Panc1 (cell line): ENCODE measurements at regions of chr1 and their contacts with region 1.

Region 1: DNA sequence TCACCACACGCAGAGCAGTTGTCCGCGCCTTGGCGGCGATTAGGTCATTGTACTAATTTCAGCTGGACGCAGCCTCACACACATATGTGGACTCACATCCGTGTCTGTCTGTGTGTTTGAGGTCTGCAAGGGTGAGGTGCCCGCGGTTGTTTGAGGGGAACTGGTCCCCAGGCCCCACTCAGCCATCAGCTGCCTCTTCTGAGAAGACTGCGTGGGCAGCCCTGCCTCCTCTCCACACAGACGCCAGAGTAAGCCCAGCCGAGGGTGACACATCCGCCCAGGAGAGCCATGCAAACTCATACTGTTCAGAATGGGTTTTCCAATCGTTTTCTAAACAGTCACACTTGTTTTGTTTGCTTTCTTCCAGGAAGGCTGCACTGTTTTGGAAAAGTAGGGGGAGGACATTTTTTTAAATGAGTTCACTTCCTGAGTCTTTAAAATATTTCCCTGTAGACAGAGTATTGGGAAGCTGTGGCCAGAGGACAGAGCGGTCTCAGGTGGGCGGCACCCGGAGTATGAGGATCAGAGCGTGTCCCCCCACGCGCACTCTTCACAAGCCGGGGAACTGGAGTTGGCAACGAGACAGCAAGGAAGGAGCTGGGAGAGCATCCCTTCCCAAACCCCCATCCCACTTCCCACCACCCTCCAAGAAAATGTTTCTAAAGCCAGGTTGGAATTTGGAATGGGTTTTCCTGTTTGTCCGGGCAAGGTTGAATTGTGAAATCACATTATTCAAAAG is 53.3 kb downstream of the TOMM20 start:
- DNase-seq: no peak
- ATAC-seq: peak; percentile 70
- H3K4me3 ChIP-seq: peak overlapping the region in 1 of 2 experiments; percentile 7; a peak in 2 of 4 replicates
- H3K27ac ChIP-seq: peak overlapping the region; percentile 100
- H3K4me1 ChIP-seq: peaks cover 69% of the 10 kb centered on the region
- H3K27me3 ChIP-seq: no peaks in the 10 kb centered on the region
- CTCF ChIP-seq: no peak

Region 2: DNA sequence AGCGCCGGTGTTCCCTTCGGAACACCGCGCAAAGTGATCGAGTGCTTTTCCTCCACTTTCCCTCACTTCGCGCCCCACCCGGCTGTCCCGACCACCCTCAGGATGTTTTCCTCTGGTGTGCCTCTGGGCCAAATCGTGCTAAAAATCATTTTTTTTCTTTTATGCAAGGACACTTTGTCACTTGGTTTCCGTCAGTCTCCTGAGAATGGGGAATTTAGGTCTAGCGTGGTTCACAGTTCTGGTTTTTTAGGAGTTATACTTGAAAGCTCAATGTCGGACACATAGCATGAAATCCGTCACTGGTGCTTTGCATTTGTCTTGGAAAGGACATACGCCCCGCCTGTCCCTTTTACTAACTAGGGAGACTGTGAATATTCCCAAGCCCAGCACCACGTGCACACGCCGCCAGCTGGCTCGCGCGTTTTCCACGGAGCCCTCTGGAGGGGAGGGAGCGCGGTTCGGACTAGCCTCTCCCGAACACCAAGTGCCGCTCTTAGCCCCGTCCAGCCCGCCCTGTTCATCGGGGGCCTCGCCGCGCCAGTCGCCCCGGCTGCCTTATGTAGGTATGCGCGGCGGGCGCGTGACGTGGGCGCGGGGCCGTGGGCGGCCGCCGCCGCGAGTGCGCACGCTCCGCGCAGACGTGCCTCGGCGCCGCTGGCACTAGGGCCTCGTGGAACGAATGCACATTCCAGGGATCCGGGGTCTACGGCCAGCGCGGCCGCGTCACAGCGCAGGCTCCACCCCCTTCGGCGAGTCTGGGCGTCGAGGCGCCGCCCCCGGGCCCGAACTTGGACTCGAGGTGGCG is 464.8 kb before region 1 on chr1:
- CTCF ChIA-PET with region 1: no interaction called
- POLR2A ChIA-PET with region 1: interaction called, 4 read pairs
- in situ Hi-C with region 1: no loop called
- intact Hi-C with region 1: loop called (anchors 5 kb)
- DNase-seq: no peak
- ATAC-seq: peak; percentile 67
- H3K4me3 ChIP-seq: peak overlapping the region; percentile 54 to 74
- H3K27ac ChIP-seq: peak overlapping the region; percentile 100
- H3K4me1 ChIP-seq: peaks cover 42% of the 10 kb centered on the region
- H3K27me3 ChIP-seq: no peaks in the 10 kb centered on the region
- CTCF ChIP-seq: no peak

Region 3: GRCh38 chr1:234683861-234684632 is 391.3 kb before region 1 on chr1:
- CTCF ChIA-PET with region 1: no interaction called
- POLR2A ChIA-PET with region 1: no interaction called
- in situ Hi-C with region 1: no loop called
- intact Hi-C with region 1: no loop called
- DNase-seq: peak; percentile 64
- ATAC-seq: peak; percentile 98
- H3K4me3 ChIP-seq: no peak overlapping the region
- H3K27ac ChIP-seq: peak overlapping the region; percentile 65
- H3K4me1 ChIP-seq: peaks cover 6% of the 10 kb centered on the region
- H3K27me3 ChIP-seq: no peaks in the 10 kb centered on the region
- CTCF ChIP-seq: no peak

Region 4: GRCh38 chr1:234722904-234723720 is 352.2 kb before region 1 on chr1:
- CTCF ChIA-PET with region 1: no interaction called
- POLR2A ChIA-PET with region 1: interaction called, 3 read pairs
- in situ Hi-C with region 1: no loop called
- intact Hi-C with region 1: loop called (anchors 5 kb)
- DNase-seq: peak; percentile 88
- ATAC-seq: peak; percentile 5; the same call in 1 of the 2 replicates
- H3K4me3 ChIP-seq: peak overlapping the region in 1 of 2 experiments; percentile 4; a peak in 1 of 4 replicates
- H3K27ac ChIP-seq: peak overlapping the region; percentile 95
- H3K4me1 ChIP-seq: peaks cover 82% of the 10 kb centered on the region
- H3K27me3 ChIP-seq: no peaks in the 10 kb centered on the region
- CTCF ChIP-seq: no peak

Region 5: DNA sequence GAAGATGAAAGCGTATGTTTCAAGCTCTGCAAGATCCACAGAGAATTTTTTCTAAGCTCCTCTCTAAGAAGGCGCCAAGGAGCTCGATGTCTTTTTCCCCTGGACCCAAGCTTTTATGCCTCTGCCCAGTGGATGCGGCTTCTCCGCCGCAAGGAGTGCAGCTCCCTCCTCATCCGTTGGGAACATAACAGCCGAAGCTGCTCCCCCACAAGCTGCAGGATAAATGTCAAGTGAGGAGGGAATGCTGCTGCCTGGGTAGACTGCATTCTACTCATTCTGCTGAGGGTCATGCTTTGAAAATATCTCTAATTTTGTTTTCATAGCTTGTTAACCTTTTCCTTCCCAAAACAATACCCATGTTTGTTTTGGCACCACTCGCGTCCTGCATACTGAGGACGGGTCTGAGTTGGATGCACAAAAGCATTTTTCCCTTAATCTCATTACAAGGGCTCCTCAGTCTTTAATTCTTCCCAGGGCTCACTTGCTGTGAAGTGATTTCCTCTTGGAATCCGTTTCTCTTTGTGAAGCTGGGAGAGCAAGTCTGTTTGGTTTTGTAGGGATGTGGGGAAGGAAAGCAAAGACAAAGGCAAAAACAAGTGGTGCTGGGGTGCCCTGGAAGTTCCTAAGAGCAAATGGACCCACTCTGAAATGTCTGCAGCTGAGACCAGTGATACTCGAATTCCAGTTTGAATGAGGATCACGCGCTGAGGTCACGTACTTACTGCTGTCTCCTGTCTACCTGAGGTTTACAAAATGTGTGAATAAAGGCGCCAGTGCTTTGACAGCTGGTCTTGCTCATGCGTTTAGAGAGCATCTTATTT is 331.4 kb before region 1 on chr1:
- CTCF ChIA-PET with region 1: no interaction called
- POLR2A ChIA-PET with region 1: no interaction called
- in situ Hi-C with region 1: loop called (anchors 10 kb)
- intact Hi-C with region 1: no loop called
- DNase-seq: no peak
- ATAC-seq: peak; percentile 79
- H3K4me3 ChIP-seq: peak overlapping the region in 1 of 2 experiments; percentile 10; a peak in 1 of 4 replicates
- H3K27ac ChIP-seq: peak overlapping the region; percentile 98
- H3K4me1 ChIP-seq: peaks cover 51% of the 10 kb centered on the region
- H3K27me3 ChIP-seq: no peaks in the 10 kb centered on the region
- CTCF ChIP-seq: no peak

Region 6: GRCh38 chr1:234875953-234876855 is 199.2 kb before region 1 on chr1:
- CTCF ChIA-PET with region 1: no interaction called
- POLR2A ChIA-PET with region 1: no interaction called
- in situ Hi-C with region 1: no loop called
- intact Hi-C with region 1: loop called (anchors 10 kb)
- DNase-seq: no peak
- ATAC-seq: peak; percentile 75
- H3K4me3 ChIP-seq: no peak overlapping the region
- H3K27ac ChIP-seq: peak overlapping the region; percentile 90
- H3K4me1 ChIP-seq: peaks cover 54% of the 10 kb centered on the region
- H3K27me3 ChIP-seq: no peaks in the 10 kb centered on the region
- CTCF ChIP-seq: no peak

Region 7: GRCh38 chr1:234955107-234955731 is 120.1 kb before region 1 on chr1:
- CTCF ChIA-PET with region 1: no interaction called
- POLR2A ChIA-PET with region 1: interaction called, 3 read pairs
- in situ Hi-C with region 1: loop called (anchors 10 kb)
- intact Hi-C with region 1: loop called (anchors 5 kb)
- DNase-seq: no peak
- ATAC-seq: no peak
- H3K4me3 ChIP-seq: no peak overlapping the region
- H3K27ac ChIP-seq: peak overlapping the region; percentile 100
- H3K4me1 ChIP-seq: peaks cover 62% of the 10 kb centered on the region
- H3K27me3 ChIP-seq: no peaks in the 10 kb centered on the region
- CTCF ChIP-seq: no peak

Region 8: GRCh38 chr1:234963180-234963903 is 112.0 kb before region 1 on chr1:
- CTCF ChIA-PET with region 1: no interaction called
- POLR2A ChIA-PET with region 1: interaction called, 3 read pairs
- in situ Hi-C with region 1: loop called (anchors 10 kb)
- intact Hi-C with region 1: loop called (anchors 5 kb)
- DNase-seq: no peak
- ATAC-seq: peak; percentile 54
- H3K4me3 ChIP-seq: peak overlapping the region in 1 of 2 experiments; percentile 29; a peak in 2 of 4 replicates
- H3K27ac ChIP-seq: peak overlapping the region; percentile 100
- H3K4me1 ChIP-seq: peaks cover 71% of the 10 kb centered on the region
- H3K27me3 ChIP-seq: no peaks in the 10 kb centered on the region
- CTCF ChIP-seq: no peak

Region 9: DNA sequence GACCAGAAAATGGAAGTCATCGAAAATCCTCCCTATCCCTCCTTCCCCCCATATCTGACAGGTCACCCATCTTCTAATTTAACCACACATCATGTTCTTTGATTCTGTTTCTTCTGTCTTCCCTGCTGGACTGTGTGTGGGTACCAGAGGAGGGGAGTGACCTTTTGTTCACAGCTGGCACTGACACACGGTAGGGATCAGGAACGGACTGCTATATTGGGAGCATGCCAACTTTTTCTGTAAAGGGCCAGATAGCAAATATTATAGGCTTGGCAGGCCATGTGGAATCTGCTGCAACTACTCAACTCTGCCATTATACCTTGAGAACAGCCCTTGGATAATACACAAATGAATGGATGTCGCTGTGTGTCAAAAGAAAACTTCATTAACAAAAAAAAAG is 60.8 kb after region 1 on chr1:
- CTCF ChIA-PET with region 1: no interaction called
- POLR2A ChIA-PET with region 1: no interaction called
- in situ Hi-C with region 1: no loop called
- intact Hi-C with region 1: no loop called
- DNase-seq: no peak
- ATAC-seq: no peak
- H3K4me3 ChIP-seq: no peak overlapping the region
- H3K27ac ChIP-seq: no peak overlapping the region
- H3K4me1 ChIP-seq: no peaks in the 10 kb centered on the region
- H3K27me3 ChIP-seq: no peaks in the 10 kb centered on the region
- CTCF ChIP-seq: no peak